ENCODE measurements at regions of chr11 and their contacts with region 1.

Region 1: GRCh38 chr11:9613118-9613829 is 39.8 kb downstream of the WEE1 start:
- DNase-seq: peak; percentile 95 to 97
- H3K4me3 ChIP-seq: peak overlapping the region in 1 of 3 donors; percentile 33
- H3K27ac ChIP-seq: peak overlapping the region; percentile 96 to 100 (median 99)
- H3K4me1 ChIP-seq: peaks cover 9 to 24% of the 10 kb centered on the region in 2 donors
- H3K27me3 ChIP-seq: no peaks in the 10 kb centered on the region
- CTCF ChIP-seq: peak; percentile 65 to 98 (median 94)
- POLR2A ChIP-seq: peak; percentile 24 to 92

Region 2: GRCh38 chr11:9527481-9528140 is 85.7 kb before region 1 on chr11:
- intact Hi-C with region 1: no loop called
- DNase-seq: no peak
- H3K4me3 ChIP-seq: no peak overlapping the region
- H3K27ac ChIP-seq: peak overlapping the region; percentile 0 to 95 (median 55)
- H3K4me1 ChIP-seq: peaks cover 41 to 43% of the 10 kb centered on the region in 2 donors
- H3K27me3 ChIP-seq: no peaks in the 10 kb centered on the region
- CTCF ChIP-seq: no peak
- POLR2A ChIP-seq: no peak

Region 3: DNA sequence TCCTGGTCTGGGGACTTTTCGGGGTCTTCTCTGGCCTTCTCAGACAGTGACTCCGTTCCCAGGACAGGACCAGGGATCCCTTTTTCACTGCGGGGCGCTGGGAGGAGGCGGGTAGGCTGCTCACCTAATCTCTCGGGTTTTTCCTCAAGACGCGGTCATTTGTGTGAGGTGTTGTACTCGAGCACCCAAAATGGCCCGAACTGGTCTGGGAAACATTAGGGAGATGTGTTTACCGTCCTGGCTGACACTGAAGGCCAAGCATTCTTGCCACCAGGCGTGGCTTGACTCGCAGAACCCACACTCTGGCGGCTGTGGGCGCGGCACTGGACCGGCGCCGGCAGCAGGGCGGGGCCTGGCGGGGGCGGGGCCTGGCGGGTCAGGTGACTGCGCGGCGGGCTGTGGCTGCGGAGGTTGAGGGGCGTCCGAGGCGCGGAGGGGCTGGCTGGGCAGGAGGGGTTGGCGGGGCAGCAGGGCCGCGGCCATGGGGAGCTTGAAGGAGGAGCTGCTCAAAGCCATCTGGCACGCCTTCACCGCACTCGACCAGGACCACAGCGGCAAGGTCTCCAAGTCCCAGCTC is 50.5 kb after region 1 on chr11 and contains the start of gene SWAP70:
- intact Hi-C with region 1: loop called (anchors 10 kb)
- DNase-seq: peak; percentile 91
- H3K4me3 ChIP-seq: peak within 1 kb of the TSS; percentile 55 to 89 (median 80)
- H3K27ac ChIP-seq: peak within 1 kb of the TSS; percentile 94 to 98 (median 95)
- H3K4me1 ChIP-seq: peaks cover 0 to 5% of the 10 kb centered on the region in 2 donors
- H3K27me3 ChIP-seq: no peaks in the 10 kb centered on the region
- CTCF ChIP-seq: peak in 4 of 6 experiments; percentile 40 to 59 (median 51)
- POLR2A ChIP-seq: peak in 1 of 2 donors; percentile 84
- total RNA-seq, gene SWAP70: 29.7 to 53.6 (median 38.8) TPM

Region 4: GRCh38 chr11:9726321-9727022 is 113.2 kb after region 1 on chr11:
- intact Hi-C with region 1: no loop called
- DNase-seq: no peak
- H3K4me3 ChIP-seq: no peak overlapping the region
- H3K27ac ChIP-seq: peak overlapping the region in 1 of 3 donors; percentile 1
- H3K4me1 ChIP-seq: no peaks in the 10 kb centered on the region
- H3K27me3 ChIP-seq: no peaks in the 10 kb centered on the region
- CTCF ChIP-seq: no peak
- POLR2A ChIP-seq: no peak

Region 5: DNA sequence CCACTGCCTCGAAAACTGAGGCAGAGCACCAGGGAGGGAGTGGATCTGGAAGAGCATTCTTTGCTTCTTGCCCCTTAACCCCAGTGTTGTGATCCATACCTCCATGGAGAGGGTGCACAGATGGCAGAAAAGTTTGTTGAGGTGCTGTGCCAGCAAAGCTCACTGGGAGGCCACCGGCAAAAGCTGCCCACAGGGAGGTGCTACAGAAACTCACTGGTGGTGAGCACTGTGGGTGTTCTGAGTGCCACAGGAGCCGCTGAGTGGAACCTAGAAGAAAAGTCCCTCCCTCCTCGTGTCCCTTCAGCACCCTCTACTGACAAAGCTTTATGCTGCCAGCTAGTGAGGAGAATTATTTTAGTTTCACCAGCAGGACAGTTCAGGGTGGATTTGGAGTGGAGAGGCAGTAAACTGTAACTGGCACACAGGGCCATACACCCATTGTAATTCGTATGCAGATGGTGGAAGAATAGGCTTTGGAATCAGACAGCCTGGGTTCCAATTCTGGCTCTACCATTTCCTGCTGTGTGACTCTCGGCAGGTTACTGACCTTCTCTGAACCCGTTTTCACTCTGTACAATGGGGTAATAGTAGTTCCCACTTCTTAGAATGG is 135.2 kb after region 1 on chr11:
- intact Hi-C with region 1: loop called (anchors 2 kb)
- DNase-seq: peak; percentile 70 to 73
- H3K4me3 ChIP-seq: no peak overlapping the region
- H3K27ac ChIP-seq: peak overlapping the region; percentile 16 to 61 (median 49)
- H3K4me1 ChIP-seq: peaks cover 0 to 38% of the 10 kb centered on the region in 2 donors
- H3K27me3 ChIP-seq: no peaks in the 10 kb centered on the region
- CTCF ChIP-seq: peak; percentile 43 to 96 (median 88)
- POLR2A ChIP-seq: no peak

Measured in thyroid gland (tissue), 4 donors.